Activated naive CD4-positive, alpha-beta T cell treated with anti-CD3 and anti-CD28 coated beads, Interleukin-2, amount 10 ng/mL, durations not matched to agents 7 days and 5 days (primary cell): ENCODE measurements at regions of chr1 and their contacts with region 1.

Region 1: GRCh38 chr1:21270086-21270689 is 20.1 kb downstream of the ECE1 start:
- DNase-seq: peak; percentile 90
- H3K4me3 Mint-ChIP-seq: no peak overlapping the region
- H3K27ac Mint-ChIP-seq: no peak overlapping the region
- H3K4me1 Mint-ChIP-seq: peaks cover 12% of the 10 kb centered on the region
- H3K27me3 Mint-ChIP-seq: no peaks in the 10 kb centered on the region

Region 2: DNA sequence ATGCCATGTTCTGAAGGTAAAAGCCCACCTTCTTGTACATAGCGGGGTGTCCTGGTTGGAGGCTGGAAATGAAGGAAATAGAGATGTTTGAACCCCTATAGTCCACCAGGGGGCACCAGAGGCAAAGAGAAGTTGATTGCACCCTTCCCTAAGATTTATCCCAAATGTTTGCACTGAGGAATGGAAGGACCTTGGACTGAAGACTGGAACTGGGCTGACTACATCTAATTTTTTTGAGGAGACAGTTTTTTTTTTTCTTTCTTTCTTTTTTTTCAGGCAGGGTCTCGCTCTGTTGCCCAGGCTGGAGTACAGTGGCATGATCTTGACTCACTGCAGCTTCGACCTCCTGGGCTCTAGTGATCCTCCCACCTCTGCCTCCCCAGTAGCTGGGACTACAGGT is 38.1 kb before region 1 on chr1:
- CTCF ChIA-PET with region 1: interaction called, 37 read pairs
- DNase-seq: peak; percentile 43
- H3K4me3 Mint-ChIP-seq: no peak overlapping the region
- H3K27ac Mint-ChIP-seq: peak overlapping the region; percentile 42
- H3K4me1 Mint-ChIP-seq: no peaks in the 10 kb centered on the region
- H3K27me3 Mint-ChIP-seq: no peaks in the 10 kb centered on the region

Region 3: DNA sequence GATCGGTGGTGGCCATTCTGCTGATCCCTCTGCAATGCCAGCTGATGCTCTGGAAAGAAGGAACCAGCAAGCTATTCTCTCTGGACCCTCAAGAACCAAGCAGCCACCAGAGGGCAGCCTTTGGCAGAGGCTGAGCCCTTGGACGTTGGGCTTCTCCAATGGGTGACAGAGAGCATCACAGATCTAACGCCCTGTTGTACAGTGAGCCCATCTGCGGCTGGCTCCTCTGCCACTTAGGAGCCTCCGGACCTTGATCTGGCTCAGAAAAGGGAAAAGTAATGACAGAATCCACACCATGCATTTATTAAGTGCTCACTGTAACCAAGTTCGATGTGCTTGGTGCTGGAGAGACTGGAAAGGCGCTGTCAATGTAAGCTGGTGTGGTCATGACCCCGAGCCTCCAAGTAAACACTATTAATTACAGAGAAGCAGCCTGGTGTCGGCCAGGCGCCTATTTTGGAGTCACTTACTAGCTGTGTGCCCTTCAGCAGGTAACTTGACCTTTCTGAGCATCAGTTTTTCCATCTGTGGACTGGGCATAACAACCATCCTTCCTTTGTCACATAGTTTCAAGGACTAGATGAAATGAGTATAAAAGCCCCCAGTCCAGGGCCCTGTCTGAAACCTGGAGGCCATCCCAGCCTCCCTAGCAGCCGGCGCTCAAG is 14.8 kb before region 1 on chr1:
- CTCF ChIA-PET with region 1: interaction called, 72 read pairs
- DNase-seq: peak; percentile 90
- H3K4me3 Mint-ChIP-seq: no peak overlapping the region
- H3K27ac Mint-ChIP-seq: peak overlapping the region; percentile 12
- H3K4me1 Mint-ChIP-seq: peaks cover 35% of the 10 kb centered on the region
- H3K27me3 Mint-ChIP-seq: no peaks in the 10 kb centered on the region

Region 4: GRCh38 chr1:21308847-21309652 is 38.9 kb after region 1 on chr1:
- CTCF ChIA-PET with region 1: interaction called, 10 read pairs
- DNase-seq: no peak
- H3K4me3 Mint-ChIP-seq: no peak overlapping the region
- H3K27ac Mint-ChIP-seq: no peak overlapping the region
- H3K4me1 Mint-ChIP-seq: peaks cover 55% of the 10 kb centered on the region
- H3K27me3 Mint-ChIP-seq: no peaks in the 10 kb centered on the region

Region 5: DNA sequence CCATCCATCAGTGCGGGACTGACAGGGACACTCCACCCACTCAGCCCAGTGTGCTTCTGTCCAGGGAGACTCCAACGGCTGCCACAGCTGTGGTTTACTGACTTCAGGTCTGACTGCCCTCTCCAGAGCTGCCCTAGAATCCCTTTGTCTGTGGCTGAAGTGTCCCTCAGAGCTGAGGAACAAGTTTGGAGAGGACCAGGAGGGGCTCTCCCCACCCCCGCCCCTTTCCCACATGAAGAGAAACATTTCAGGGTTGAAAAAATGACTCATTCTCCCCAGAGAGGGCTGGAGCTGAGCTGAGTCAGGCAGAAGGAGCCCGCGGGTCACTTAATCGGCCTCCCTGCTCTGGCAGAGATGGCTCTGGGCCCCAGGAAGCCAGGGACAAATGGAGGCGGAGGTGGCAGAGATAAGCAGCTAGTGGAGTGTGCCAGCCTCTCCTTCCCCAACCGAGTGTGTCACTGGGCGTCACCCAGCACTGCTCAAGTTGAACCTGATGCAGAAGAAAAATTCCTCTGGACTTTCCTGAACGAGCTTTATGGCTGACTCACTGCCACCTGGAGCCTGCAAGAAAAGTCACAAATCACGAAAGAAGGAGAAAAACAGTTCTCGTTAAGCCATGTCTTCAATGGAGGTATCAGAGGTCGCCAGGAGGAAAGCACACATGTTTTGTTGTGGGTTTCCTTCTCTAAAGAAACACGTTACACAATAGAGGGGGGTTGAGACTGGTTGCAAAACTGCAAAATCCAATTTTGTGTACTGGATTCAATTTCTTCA is 54.4 kb after region 1 on chr1:
- CTCF ChIA-PET with region 1: interaction called, 26 read pairs
- DNase-seq: peak; percentile 65
- H3K4me3 Mint-ChIP-seq: peak overlapping the region; percentile 45
- H3K27ac Mint-ChIP-seq: peak overlapping the region; percentile 92
- H3K4me1 Mint-ChIP-seq: peaks cover 81% of the 10 kb centered on the region
- H3K27me3 Mint-ChIP-seq: no peaks in the 10 kb centered on the region

Region 6: GRCh38 chr1:21344750-21345443 is 74.7 kb after region 1 on chr1:
- CTCF ChIA-PET with region 1: interaction called, 12 read pairs
- DNase-seq: peak; percentile 56
- H3K4me3 Mint-ChIP-seq: peak overlapping the region; percentile 87
- H3K27ac Mint-ChIP-seq: peak overlapping the region; percentile 89
- H3K4me1 Mint-ChIP-seq: peaks cover 41% of the 10 kb centered on the region
- H3K27me3 Mint-ChIP-seq: peaks cover 3% of the 10 kb centered on the region

Region 7: GRCh38 chr1:21368515-21369289 is 98.5 kb after region 1 on chr1:
- CTCF ChIA-PET with region 1: interaction called, 19 read pairs
- DNase-seq: peak; percentile 68
- H3K4me3 Mint-ChIP-seq: no peak overlapping the region
- H3K27ac Mint-ChIP-seq: no peak overlapping the region
- H3K4me1 Mint-ChIP-seq: peaks cover 7% of the 10 kb centered on the region
- H3K27me3 Mint-ChIP-seq: peaks cover 7% of the 10 kb centered on the region